Activated CD4-positive, alpha-beta memory T cell treated with anti-CD3 and anti-CD28 coated beads, Interleukin-2, amount 10 ng/mL, durations not matched to agents 7 days and 5 days (primary cell): ENCODE measurements at regions of chr10 and their contacts with region 1.

Region 1: GRCh38 chr10:112140110-112140970 is 43.2 kb downstream of the GPAM start:
- DNase-seq: peak; percentile 77
- H3K4me3 Mint-ChIP-seq: no peak overlapping the region
- H3K27ac Mint-ChIP-seq: no peak overlapping the region
- H3K4me1 Mint-ChIP-seq: peaks cover 3% of the 10 kb centered on the region
- H3K27me3 Mint-ChIP-seq: peaks cover 1% of the 10 kb centered on the region

Region 2: DNA sequence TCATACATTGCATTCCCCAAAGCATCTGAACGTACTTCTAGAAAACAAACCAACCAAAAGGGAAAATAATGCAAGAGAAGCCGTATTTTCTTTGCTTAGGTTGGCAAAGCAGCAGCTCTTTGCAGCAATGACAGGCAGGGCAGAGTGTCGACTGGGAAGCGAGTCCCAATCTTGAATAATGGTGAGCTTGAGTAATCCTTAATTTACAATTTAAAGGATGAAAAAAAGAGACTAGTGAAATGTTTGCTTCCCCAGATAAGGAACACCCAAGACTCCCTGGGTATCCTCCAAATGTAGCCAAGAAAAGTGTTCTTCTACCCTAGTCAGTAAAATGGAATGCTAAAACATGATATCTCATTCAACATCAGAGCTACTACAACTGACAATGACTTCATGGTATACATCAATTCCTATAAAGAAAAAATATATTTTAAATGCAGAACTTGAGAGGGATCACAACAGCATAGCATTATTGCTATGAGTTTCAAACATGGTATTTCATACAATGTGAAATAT is 11.2 kb after region 1 on chr10:
- CTCF ChIA-PET with region 1: interaction called, 19 read pairs
- POLR2A ChIA-PET with region 1: no interaction called
- DNase-seq: no peak
- H3K4me3 Mint-ChIP-seq: no peak overlapping the region
- H3K27ac Mint-ChIP-seq: no peak overlapping the region
- H3K4me1 Mint-ChIP-seq: peaks cover 3% of the 10 kb centered on the region
- H3K27me3 Mint-ChIP-seq: no peaks in the 10 kb centered on the region

Region 3: GRCh38 chr10:112173206-112173605 is 32.9 kb after region 1 on chr10:
- CTCF ChIA-PET with region 1: interaction called, 11 read pairs
- POLR2A ChIA-PET with region 1: no interaction called
- DNase-seq: no peak
- H3K4me3 Mint-ChIP-seq: no peak overlapping the region
- H3K27ac Mint-ChIP-seq: no peak overlapping the region
- H3K4me1 Mint-ChIP-seq: no peaks in the 10 kb centered on the region
- H3K27me3 Mint-ChIP-seq: no peaks in the 10 kb centered on the region

Region 4: GRCh38 chr10:112191791-112192190 is 51.5 kb after region 1 on chr10:
- CTCF ChIA-PET with region 1: no interaction called
- POLR2A ChIA-PET with region 1: no interaction called
- DNase-seq: no peak
- H3K4me3 Mint-ChIP-seq: no peak overlapping the region
- H3K27ac Mint-ChIP-seq: no peak overlapping the region
- H3K4me1 Mint-ChIP-seq: no peaks in the 10 kb centered on the region
- H3K27me3 Mint-ChIP-seq: peaks cover 13% of the 10 kb centered on the region

Region 5: GRCh38 chr10:112286837-112287818 is 146.8 kb after region 1 on chr10:
- CTCF ChIA-PET with region 1: no interaction called
- POLR2A ChIA-PET with region 1: no interaction called
- DNase-seq: no peak
- H3K4me3 Mint-ChIP-seq: no peak overlapping the region
- H3K27ac Mint-ChIP-seq: no peak overlapping the region
- H3K4me1 Mint-ChIP-seq: no peaks in the 10 kb centered on the region
- H3K27me3 Mint-ChIP-seq: peaks cover 4% of the 10 kb centered on the region

Region 6: DNA sequence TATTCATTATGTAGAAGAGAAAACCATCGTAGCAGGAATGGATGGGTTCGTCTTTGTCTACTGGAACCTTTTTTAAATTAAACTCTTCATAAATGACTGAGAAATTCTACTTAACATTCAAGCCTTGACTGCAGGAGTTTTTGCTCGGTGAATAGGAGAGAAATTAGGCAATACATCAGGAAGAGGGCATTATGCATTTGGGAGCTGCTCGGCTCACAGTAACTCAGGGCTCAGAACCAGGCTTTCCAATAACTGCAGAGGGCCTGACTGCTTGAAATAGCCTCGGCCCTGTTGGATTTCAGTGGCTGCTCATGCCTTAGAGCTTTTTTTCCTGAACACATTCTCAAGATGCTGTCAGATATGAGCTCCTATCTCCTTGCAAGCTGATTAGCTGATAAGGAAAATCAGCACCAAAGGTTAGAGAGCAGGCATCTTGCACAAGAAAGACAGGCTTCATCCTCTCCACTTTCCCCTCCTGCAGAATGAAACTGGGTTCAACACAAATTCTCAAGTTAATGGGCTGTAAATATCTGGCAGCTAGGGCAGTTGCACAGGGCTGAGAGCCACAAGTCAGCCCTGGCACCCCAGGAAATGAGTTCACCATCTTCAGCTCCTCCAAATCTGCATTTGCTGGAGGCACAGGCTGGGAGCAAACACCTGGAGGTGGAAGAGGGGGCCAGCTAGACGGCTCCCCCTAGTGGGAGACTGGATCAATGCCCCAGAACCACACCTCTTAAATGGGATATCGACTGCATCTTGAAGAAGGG is 167.2 kb after region 1 on chr10:
- CTCF ChIA-PET with region 1: interaction called, 10 read pairs
- POLR2A ChIA-PET with region 1: no interaction called
- DNase-seq: peak; percentile 31
- H3K4me3 Mint-ChIP-seq: no peak overlapping the region
- H3K27ac Mint-ChIP-seq: no peak overlapping the region
- H3K4me1 Mint-ChIP-seq: no peaks in the 10 kb centered on the region
- H3K27me3 Mint-ChIP-seq: peaks cover 34% of the 10 kb centered on the region

Region 7: GRCh38 chr10:112434988-112435619 is 294.8 kb after region 1 on chr10:
- CTCF ChIA-PET with region 1: interaction called, 22 read pairs
- POLR2A ChIA-PET with region 1: no interaction called
- DNase-seq: no peak
- H3K4me3 Mint-ChIP-seq: no peak overlapping the region
- H3K27ac Mint-ChIP-seq: no peak overlapping the region
- H3K4me1 Mint-ChIP-seq: no peaks in the 10 kb centered on the region
- H3K27me3 Mint-ChIP-seq: no peaks in the 10 kb centered on the region